Heart left ventricle (tissue), 16 donors: ENCODE measurements at regions of chr5 and their contacts with region 1.

Region 1: GRCh38 chr5:160030631-160031377 is 21.9 kb downstream of the TTC1 start:
- DNase-seq: no peak
- ATAC-seq: peak in 2 of 4 donors; percentile 10 to 38
- H3K4me3 ChIP-seq: no peak overlapping the region
- H3K27ac ChIP-seq: peak overlapping the region in 3 of 12 donors; percentile 5 to 36 (median 30)
- H3K4me1 ChIP-seq: peaks cover 0 to 45% (median 20%) of the 10 kb centered on the region in 12 donors
- H3K27me3 ChIP-seq: no peaks in the 10 kb centered on the region
- CTCF ChIP-seq: no peak
- POLR2A ChIP-seq: no peak

Region 2: GRCh38 chr5:160382346-160382745 is 351.5 kb after region 1 on chr5:
- intact Hi-C with region 1: loop called in 2 of 10 experiments (anchors 5 to 10 kb)
- DNase-seq: no peak
- ATAC-seq: no peak
- H3K4me3 ChIP-seq: no peak overlapping the region
- H3K27ac ChIP-seq: no peak overlapping the region
- H3K4me1 ChIP-seq: peaks cover 0 to 12% (median 0%) of the 10 kb centered on the region in 12 donors
- H3K27me3 ChIP-seq: no peaks in the 10 kb centered on the region
- CTCF ChIP-seq: no peak
- POLR2A ChIP-seq: no peak